Activated CD4-positive, alpha-beta T cell treated with anti-CD3 and anti-CD28 coated beads for 36 hours (primary cell): ENCODE measurements at regions of chr18 and their contacts with region 1.

Region 1: GRCh38 chr18:59085797-59086196 is 53.9 kb upstream of the SEC11C start:
- DNase-seq: no peak
- ATAC-seq: no peak
- H3K4me3 Mint-ChIP-seq: no peak overlapping the region
- H3K27ac Mint-ChIP-seq: no peak overlapping the region
- H3K4me1 Mint-ChIP-seq: peaks cover 12% of the 10 kb centered on the region
- H3K27me3 Mint-ChIP-seq: peaks cover 13% of the 10 kb centered on the region

Region 2: DNA sequence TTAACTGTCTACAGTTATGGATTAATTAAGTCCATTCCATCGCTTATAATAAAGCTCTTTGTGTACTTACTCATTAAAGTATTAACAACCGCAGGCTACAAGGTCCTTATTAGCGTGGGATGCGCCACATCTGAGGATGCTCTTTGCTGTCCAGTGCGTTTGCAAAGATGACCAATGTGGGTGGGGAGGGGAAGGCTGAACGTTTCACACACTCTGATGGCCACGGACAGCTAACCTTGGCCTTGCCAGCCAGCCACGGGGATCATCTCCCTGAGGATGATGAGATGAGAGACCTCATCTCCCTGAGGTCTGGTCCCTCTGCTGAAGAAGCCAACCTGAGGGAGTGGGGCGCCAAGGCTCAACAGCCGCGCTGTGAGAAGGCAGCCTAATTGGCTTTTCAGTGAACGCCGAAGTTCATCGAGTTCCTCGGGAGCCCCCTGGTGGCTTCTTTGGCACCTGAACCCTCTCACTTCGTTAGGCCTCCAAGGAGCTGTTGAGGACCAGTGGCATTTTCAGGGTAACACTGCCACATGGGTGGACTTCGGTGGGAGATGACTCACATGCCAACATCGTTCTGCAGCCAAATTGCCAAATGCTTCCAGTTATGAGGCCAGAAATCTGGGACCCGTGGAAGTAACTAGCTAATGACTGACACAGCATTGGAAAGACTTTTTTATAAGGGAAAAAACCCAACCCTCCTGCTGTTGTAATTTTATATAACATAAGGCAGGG is 15.4 kb before region 1 on chr18:
- CTCF ChIA-PET with region 1: interaction called, 51 read pairs
- POLR2A ChIA-PET with region 1: no interaction called
- intact Hi-C with region 1: no loop called
- DNase-seq: peak; percentile 91
- ATAC-seq: peak; percentile 93
- H3K4me3 Mint-ChIP-seq: no peak overlapping the region
- H3K27ac Mint-ChIP-seq: no peak overlapping the region
- H3K4me1 Mint-ChIP-seq: peaks cover 4% of the 10 kb centered on the region
- H3K27me3 Mint-ChIP-seq: no peaks in the 10 kb centered on the region

Region 3: GRCh38 chr18:59101830-59102414 is 16.1 kb after region 1 on chr18:
- CTCF ChIA-PET with region 1: no interaction called
- POLR2A ChIA-PET with region 1: no interaction called
- intact Hi-C with region 1: no loop called
- DNase-seq: no peak
- ATAC-seq: no peak
- H3K4me3 Mint-ChIP-seq: no peak overlapping the region
- H3K27ac Mint-ChIP-seq: no peak overlapping the region
- H3K4me1 Mint-ChIP-seq: no peaks in the 10 kb centered on the region
- H3K27me3 Mint-ChIP-seq: peaks cover 23% of the 10 kb centered on the region

Region 4: DNA sequence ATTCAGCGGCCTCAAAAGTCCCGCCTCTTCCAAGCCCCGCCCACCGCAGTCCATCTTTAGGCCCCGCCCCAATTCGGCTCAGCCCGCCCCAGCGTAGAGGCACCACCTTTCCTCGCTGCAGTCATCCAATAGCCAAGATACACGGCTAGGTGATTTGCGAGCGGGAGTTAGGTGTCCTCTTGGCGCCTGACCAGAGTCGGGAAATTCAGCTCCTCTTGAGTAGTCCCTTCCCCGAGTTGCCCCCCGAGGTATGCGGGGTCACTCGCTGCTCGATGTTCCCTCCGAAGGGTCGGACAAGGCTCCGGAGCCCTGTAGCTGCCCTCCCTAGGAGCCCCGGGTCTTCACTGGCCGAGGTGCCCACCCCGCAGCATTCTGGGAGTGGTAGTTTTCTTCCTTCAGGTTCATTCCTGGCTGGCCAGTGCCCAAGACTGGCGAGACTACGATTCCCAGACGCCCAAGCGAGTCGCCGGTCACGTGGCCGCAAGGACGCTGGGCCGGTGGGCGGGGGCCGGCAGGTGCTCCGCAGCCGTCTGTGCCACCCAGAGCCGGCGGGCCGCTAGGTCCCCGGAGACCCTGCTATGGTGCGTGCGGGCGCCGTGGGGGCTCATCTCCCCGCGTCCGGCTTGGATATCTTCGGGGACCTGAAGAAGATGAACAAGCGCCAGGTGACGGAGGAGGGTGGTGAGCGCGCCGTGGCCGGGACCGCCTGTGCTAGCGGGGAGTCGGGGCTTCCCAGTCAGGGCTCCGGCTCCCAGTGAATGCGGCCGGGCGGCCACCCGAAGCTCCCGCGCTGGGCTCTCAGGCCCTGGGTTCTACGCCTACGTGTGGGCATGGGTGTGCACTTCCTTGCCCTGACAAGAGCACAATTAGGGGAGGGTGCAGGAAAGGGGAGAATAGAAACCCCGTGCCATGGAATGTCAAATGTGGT is 53.8 kb after region 1 on chr18 and contains the start of gene SEC11C:
- CTCF ChIA-PET with region 1: interaction called, 7 read pairs
- POLR2A ChIA-PET with region 1: no interaction called
- intact Hi-C with region 1: loop called (anchors 2 kb)
- DNase-seq: peak; percentile 97
- ATAC-seq: peak; percentile 94
- H3K4me3 Mint-ChIP-seq: peak within 1 kb of the TSS; percentile 94
- H3K27ac Mint-ChIP-seq: peak within 1 kb of the TSS; percentile 95
- H3K4me1 Mint-ChIP-seq: peaks cover 42% of the 10 kb centered on the region
- H3K27me3 Mint-ChIP-seq: peaks cover 8% of the 10 kb centered on the region
- total RNA-seq, gene SEC11C: 53.5 to 70.2 TPM

Region 5: GRCh38 chr18:59148192-59148591 is 62.4 kb after region 1 on chr18:
- CTCF ChIA-PET with region 1: interaction called, 7 read pairs
- POLR2A ChIA-PET with region 1: no interaction called
- intact Hi-C with region 1: loop called in 1 of 2 experiments (anchors 2 kb)
- DNase-seq: no peak
- ATAC-seq: no peak
- H3K4me3 Mint-ChIP-seq: no peak overlapping the region
- H3K27ac Mint-ChIP-seq: peak overlapping the region; percentile 49
- H3K4me1 Mint-ChIP-seq: peaks cover 58% of the 10 kb centered on the region
- H3K27me3 Mint-ChIP-seq: no peaks in the 10 kb centered on the region

Region 6: DNA sequence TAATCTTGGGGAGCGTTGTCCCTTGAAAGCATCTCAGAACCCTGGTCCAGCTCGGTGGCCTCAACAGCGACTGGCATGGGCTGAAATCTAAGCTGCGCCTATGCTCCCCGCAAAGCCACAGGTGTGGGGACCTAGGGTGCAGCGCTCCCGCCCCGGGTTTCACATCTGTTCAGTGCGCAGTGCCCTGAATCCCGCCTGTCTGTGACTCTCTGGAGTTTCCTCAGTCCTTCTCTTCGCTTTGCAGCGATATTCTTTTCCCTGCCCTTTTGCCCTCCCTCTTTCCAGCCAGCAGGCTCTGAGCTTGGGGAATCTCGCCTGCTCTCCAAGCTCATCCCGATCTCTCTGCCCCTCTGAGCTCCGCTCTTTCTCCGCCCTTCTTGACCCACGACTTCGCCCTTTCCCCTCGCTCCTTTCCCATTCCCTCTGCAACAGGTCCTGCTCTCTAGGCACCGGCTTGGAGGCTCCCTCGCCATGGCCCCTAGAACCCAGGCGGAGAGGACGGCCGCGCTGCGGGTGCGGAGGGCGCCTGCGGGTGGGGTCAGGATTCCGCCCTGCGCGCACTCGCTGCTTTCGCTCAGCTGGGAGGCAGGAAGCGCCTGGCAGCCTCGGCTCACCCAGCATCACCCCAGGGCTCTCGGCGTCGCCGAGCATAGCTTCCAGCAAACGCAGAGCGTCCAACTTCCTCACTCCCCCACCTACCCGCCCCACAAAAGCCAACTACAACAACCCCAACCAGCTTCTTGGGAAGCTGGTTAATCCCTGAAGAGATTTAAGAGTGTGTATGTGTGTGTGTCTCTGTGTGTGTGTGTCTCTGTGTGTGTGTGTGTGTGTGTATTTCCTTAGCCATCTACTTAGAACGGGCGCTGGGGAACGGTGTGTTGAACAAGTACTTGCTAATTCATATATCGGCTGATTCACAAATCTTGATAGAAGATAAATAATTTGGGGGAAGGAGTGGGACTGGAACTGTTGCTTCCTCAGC is 135.3 kb after region 1 on chr18:
- CTCF ChIA-PET with region 1: interaction called, 15 read pairs
- POLR2A ChIA-PET with region 1: no interaction called
- intact Hi-C with region 1: loop called (anchors 1 to 2 kb)
- DNase-seq: peak; percentile 17
- ATAC-seq: no peak
- H3K4me3 Mint-ChIP-seq: no peak overlapping the region
- H3K27ac Mint-ChIP-seq: no peak overlapping the region
- H3K4me1 Mint-ChIP-seq: peaks cover 11% of the 10 kb centered on the region
- H3K27me3 Mint-ChIP-seq: peaks cover 59% of the 10 kb centered on the region

Region 7: DNA sequence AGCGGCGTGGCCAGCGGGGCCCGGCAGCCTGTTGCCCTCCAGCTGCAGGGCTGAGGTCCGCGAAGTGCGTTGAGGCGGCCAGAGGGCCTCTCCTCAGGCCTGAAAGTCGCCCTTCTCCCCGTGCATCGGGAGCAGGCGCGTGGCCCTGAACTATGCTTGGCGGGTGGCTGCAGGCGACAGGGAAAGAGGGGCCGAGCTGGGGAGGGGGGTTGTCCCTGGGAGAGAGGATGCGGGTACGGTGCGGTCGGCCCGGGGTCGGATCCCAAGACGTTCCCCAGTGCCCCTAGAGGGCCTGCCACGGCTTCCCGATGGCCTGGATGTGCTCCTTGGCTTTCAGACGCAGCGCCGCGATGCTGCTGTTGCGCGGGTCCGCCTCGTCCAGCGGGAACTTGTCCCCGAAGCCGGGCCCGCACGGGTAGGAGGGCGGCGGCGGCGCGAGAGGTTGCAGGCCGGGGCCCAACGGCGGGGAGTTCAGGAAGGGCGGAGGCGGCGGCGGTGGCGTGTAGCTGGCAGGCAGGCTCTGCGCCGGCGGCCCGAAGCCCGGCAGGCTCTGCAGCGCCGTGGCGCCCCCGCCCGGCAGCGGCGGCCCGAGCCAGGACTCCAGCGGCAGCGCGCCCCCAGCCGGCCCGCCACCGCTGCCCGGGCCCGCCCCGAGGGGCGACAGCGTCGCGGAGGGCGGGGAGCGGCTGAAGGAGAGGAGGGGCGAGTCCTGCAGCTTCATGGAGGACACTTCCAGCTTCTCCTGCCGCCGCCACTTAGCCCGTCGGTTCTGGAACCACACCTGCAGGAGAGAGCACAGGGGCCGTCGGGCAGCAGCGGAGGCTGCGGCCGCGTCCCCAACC is 183.1 kb after region 1 on chr18:
- CTCF ChIA-PET with region 1: interaction called, 9 read pairs
- POLR2A ChIA-PET with region 1: no interaction called
- intact Hi-C with region 1: loop called (anchors 1 to 2 kb)
- DNase-seq: peak; percentile 82
- ATAC-seq: peak; percentile 76
- H3K4me3 Mint-ChIP-seq: peak overlapping the region; percentile 32
- H3K27ac Mint-ChIP-seq: no peak overlapping the region
- H3K4me1 Mint-ChIP-seq: peaks cover 32% of the 10 kb centered on the region
- H3K27me3 Mint-ChIP-seq: peaks cover 77% of the 10 kb centered on the region